PC-9 (cell line): ENCODE measurements at regions of chr2 and their contacts with region 1.

Region 1: DNA sequence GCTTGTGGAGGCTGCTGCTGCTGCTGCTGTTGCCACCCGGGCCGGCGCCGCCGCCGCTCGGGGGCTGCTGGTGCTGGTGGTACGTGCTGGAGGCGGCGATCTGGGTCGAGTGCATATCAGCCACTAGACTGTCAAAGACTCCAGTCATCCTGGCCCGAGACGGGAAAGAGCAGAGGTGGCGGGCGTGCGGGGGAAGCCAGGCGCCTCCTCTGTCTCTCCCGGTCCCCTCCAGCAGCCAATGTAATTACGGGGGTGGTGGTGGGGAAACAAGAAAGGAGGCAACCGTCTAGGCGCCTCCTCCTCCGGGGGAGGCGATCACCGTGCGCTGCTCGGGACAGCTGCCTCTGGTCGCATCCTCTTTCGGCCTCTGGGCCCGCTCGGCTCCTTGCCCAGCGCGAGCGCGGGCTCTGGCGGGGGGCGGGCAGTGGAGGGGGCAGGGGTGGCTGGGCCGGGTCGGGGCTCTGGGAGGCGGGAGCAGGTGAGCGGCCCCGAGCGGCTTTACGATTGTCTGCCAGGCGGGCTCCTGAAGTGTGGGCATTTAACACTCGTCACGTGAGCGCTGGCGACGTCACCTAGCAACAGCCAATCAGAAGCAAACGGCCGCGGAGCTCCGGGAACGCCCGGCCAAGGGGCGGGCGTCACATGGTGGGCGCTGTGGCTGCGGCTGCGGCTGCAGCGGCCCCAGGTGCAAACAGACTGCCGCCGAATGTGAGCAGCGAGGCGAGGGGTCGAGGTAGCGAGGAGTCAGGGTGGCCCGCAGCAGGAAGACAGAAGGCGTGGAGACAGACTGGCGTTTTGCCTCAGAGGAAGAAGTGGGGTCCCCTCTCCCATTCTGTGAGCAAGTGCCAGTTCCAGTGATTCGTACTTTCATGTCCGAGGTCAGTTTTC is at the start of gene DLX2:
- DNase-seq: peak; percentile 93
- H3K4me3 ChIP-seq: peak within 1 kb of the TSS; percentile 73
- H3K27ac ChIP-seq: no peak within 1 kb of the TSS
- H3K4me1 ChIP-seq: peaks cover 34% of the 10 kb centered on the region
- H3K27me3 ChIP-seq: no peaks in the 10 kb centered on the region
- CTCF ChIP-seq: no peak
- total RNA-seq, gene DLX2: 0.65 and 0.76 TPM in 2 replicates

Region 2: GRCh38 chr2:170928824-170929685 is 1173.6 kb before region 1 on chr2 and contains the start of gene GORASP2:
- CTCF ChIA-PET with region 1: no interaction called
- POLR2A ChIA-PET with region 1: interaction called, 3 read pairs
- intact Hi-C with region 1: loop called (anchors 2 kb)
- DNase-seq: peak; percentile 98 to 99
- H3K4me3 ChIP-seq: peak within 1 kb of the TSS; percentile 94
- H3K27ac ChIP-seq: peak within 1 kb of the TSS; percentile 89
- H3K4me1 ChIP-seq: peaks cover 29% of the 10 kb centered on the region
- H3K27me3 ChIP-seq: no peaks in the 10 kb centered on the region
- CTCF ChIP-seq: peak; percentile 93
- total RNA-seq, gene GORASP2: 74.7 and 110 TPM in 2 replicates

Region 3: GRCh38 chr2:171433763-171434670 is 668.6 kb before region 1 on chr2 and contains the starts of genes DCAF17 and METTL8:
- CTCF ChIA-PET with region 1: no interaction called
- POLR2A ChIA-PET with region 1: no interaction called
- intact Hi-C with region 1: loop called (anchors 10 kb)
- DNase-seq: peak; percentile 95 to 98
- H3K4me3 ChIP-seq: peak within 1 kb of the TSS; percentile 64
- H3K27ac ChIP-seq: peak within 1 kb of the TSS; percentile 93
- H3K4me1 ChIP-seq: peaks cover 25% of the 10 kb centered on the region
- H3K27me3 ChIP-seq: no peaks in the 10 kb centered on the region
- CTCF ChIP-seq: peak; percentile 50
- total RNA-seq, gene DCAF17: 22.0 and 22.1 TPM in 2 replicates
- total RNA-seq, gene METTL8: 21.8 and 24.3 TPM in 2 replicates

Region 4: DNA sequence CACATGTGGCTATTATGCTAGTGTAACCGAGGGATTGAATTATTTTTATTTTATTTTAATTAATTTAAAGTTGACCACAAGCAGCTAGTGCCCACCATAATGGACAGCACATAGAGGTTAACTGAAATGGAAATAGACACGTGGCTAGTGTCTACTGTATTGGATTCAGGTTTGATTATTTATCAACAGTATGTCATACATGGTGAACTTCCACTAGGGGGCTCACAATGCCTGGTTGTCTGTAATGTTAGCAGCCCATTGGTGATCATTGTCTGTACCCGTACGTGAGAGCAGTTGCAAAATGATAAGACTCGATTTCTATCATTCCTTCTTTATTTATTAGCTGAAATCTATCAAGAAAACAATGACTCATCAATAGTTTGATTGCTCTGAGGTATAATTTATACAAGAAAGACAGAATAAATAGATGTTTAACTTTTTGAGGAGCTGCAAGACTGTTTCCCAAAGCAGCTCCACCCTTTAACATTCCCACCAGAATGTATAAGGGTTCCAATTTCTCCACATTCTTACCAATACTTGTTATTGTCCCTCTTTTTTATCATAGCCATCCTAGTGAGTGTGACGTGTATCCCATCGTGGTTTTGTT is 503.8 kb before region 1 on chr2:
- CTCF ChIA-PET with region 1: no interaction called
- POLR2A ChIA-PET with region 1: no interaction called
- intact Hi-C with region 1: loop called (anchors 1 kb)
- DNase-seq: peak; percentile 47 to 63
- H3K4me3 ChIP-seq: no peak overlapping the region
- H3K27ac ChIP-seq: no peak overlapping the region
- H3K4me1 ChIP-seq: no peaks in the 10 kb centered on the region
- H3K27me3 ChIP-seq: peaks cover 17% of the 10 kb centered on the region; the same call in 1 of the 2 replicates
- CTCF ChIP-seq: peak; percentile 100

Region 5: DNA sequence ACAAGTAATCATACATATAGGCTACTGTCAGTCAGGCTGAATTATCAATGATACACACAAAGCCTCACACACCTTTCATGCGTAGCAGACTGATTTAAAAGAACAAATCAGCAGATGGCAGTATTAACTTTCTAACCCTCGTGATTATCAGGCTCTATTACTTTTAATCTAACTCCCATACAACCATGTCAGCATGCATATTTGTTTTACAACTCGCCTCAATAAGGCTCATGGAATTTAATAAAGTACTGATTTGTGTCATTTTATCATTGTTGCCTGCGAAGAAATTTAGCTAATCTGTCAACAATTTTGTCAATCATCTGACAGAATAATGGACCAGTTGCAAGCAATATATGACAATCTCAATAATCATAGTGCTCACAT is 291.4 kb before region 1 on chr2:
- CTCF ChIA-PET with region 1: interaction called, 5 read pairs
- POLR2A ChIA-PET with region 1: no interaction called
- intact Hi-C with region 1: loop called (anchors 1 kb)
- DNase-seq: peak in 1 of 2 experiments; percentile 55
- H3K4me3 ChIP-seq: no peak overlapping the region
- H3K27ac ChIP-seq: no peak overlapping the region
- H3K4me1 ChIP-seq: peaks cover 19% of the 10 kb centered on the region
- H3K27me3 ChIP-seq: no peaks in the 10 kb centered on the region
- CTCF ChIP-seq: peak; percentile 70

Region 6: GRCh38 chr2:171922230-171923022 is 180.2 kb before region 1 on chr2 and contains the start of gene HAT1:
- CTCF ChIA-PET with region 1: interaction called, 5 read pairs
- POLR2A ChIA-PET with region 1: interaction called, 6 read pairs
- intact Hi-C with region 1: loop called (anchors 1 kb)
- DNase-seq: peak; percentile 98 to 100
- H3K4me3 ChIP-seq: peak within 1 kb of the TSS; percentile 68
- H3K27ac ChIP-seq: peak within 1 kb of the TSS; percentile 52
- H3K4me1 ChIP-seq: peaks cover 25% of the 10 kb centered on the region
- H3K27me3 ChIP-seq: no peaks in the 10 kb centered on the region
- CTCF ChIP-seq: no peak
- total RNA-seq, gene HAT1: 96.4 and 132 TPM in 2 replicates

Region 7: GRCh38 chr2:171999604-172000469 is 102.8 kb before region 1 on chr2 and contains the start of gene METAP1D:
- CTCF ChIA-PET with region 1: interaction called, 4 read pairs
- POLR2A ChIA-PET with region 1: no interaction called
- intact Hi-C with region 1: loop called (anchors 1 kb)
- DNase-seq: peak; percentile 91 to 100
- H3K4me3 ChIP-seq: peak within 1 kb of the TSS; percentile 65
- H3K27ac ChIP-seq: peak within 1 kb of the TSS; percentile 77
- H3K4me1 ChIP-seq: peaks cover 17% of the 10 kb centered on the region
- H3K27me3 ChIP-seq: no peaks in the 10 kb centered on the region
- CTCF ChIP-seq: no peak; the same call in 1 of the 2 replicates
- total RNA-seq, gene METAP1D: 21.5 and 32.4 TPM in 2 replicates